ENCODE measurements at regions of chr7 and their contacts with region 1.

Region 1: GRCh38 chr7:29921404-29922010 is 68.1 kb downstream of the SCRN1 start:
- DNase-seq: no peak

Region 2: GRCh38 chr7:29639881-29640595 is 281.5 kb before region 1 on chr7:
- intact Hi-C with region 1: loop called (anchors 5 kb)
- DNase-seq: no peak

Region 3: DNA sequence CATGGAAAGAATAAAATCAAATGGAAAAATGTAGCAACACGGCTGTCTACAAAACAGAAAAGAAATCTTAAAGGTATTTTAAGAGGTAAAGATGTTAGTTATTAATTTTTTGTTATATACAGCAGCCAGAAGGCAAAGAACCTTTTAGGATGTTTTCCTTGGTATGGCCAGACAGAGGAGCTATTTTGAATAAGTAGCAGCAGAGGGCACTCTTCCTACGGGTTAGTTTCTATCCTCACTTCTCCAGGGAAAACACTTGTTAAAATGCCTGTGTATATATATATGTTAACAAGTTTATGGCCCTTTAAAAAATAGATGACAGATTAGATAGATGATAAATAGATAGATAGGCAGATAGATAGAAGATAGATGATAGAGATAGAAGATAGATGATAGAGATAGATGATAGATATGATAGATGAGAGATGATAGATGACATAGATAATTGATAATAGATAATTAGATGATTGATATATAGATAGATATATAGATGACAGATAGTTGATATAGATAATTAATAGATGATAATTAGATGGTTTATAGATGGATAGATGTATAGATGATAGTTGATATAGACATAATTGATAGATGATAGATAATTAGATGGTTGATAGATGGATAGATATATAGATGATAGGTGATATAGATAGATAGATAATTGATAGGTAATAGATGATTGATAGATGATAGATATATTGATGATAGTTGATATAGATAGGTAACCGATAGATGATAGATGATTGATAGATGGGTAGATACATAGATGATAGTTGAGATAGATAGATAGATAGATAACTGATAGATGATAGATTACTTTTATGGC is 173.0 kb before region 1 on chr7:
- intact Hi-C with region 1: loop called (anchors 2 kb)
- DNase-seq: no peak

Region 4: DNA sequence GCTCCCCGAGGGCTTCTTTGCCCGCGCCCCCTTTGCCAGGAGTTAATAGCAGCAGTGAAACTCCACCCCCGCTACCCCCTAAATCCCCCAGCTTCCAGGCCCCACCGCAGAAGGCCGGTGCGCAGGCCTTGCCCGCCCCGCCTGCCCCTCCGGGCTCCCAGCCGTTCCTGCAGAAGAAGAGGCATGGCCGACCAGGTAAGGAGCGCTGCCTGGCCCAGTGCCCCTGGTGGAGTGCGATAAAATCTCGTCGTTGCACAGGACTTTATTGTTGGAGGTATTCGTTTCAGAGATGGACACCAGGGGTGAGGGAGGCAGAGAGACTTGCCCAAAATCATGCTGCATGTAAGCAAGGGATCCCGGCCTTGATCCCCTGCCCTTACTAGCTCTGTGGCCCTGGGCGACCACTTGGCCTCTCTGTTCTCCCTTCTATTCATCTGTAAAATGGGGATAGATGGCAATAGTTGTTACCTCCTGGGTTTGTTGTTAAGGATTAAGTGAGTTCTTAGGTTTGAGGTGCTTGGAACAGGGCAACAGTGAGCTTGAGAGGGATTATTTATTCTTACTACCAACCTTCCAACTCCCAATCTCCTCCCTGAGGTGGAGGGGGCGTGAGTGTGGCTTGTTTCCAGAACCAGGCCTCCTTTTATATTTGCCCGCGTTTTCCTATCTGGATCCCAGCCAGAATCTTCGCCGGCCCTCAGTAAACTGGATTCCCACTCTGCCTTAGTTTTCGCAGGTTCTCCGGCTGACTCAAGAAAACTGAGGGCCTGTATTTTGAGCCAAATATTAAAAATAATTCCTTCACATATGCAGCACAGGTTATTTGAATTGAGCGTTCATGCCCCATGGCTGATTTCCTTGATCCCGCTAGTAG is 36.9 kb before region 1 on chr7:
- intact Hi-C with region 1: loop called (anchors 5 kb)
- DNase-seq: no peak